HEK293T (cell line): ENCODE measurements at regions of chr5 and their contacts with region 1.

Region 1: DNA sequence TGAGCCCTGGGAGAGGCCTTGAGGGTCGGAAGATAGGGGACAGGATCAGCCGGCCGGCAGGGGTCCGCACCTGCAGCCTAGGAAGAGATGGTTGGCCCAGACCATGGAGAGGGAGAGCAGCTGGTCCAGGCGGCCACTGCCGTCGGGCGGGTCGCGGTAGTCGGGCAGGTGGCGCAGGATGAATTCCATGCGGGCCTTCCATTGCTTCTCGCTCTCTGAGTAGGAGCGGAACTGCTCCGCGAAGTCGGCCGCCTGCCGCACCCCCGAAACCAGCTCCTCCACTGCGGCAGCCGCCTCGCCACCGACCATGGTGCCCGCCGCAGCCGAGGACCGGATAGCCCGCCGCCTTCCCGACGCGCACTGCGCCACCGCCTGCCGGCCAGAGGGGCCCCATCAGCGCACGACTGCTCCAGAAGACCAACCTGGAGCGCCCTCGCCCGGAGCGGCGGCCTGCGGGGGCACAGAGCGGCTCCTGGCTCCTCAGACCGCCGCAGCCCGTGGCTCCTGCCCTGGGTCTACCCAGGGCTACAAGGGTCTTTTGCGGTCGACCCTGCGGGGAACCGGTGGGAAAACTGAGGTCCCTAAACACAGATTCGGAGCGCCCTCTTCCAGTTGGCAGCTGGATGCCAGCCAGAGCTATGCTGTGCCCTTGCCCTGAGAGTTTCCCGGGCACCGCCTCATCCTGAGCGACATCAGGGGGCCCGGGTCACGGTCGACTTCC is at the start of gene CDKN2AIPNL:
- DNase-seq: peak; percentile 85

Region 2: DNA sequence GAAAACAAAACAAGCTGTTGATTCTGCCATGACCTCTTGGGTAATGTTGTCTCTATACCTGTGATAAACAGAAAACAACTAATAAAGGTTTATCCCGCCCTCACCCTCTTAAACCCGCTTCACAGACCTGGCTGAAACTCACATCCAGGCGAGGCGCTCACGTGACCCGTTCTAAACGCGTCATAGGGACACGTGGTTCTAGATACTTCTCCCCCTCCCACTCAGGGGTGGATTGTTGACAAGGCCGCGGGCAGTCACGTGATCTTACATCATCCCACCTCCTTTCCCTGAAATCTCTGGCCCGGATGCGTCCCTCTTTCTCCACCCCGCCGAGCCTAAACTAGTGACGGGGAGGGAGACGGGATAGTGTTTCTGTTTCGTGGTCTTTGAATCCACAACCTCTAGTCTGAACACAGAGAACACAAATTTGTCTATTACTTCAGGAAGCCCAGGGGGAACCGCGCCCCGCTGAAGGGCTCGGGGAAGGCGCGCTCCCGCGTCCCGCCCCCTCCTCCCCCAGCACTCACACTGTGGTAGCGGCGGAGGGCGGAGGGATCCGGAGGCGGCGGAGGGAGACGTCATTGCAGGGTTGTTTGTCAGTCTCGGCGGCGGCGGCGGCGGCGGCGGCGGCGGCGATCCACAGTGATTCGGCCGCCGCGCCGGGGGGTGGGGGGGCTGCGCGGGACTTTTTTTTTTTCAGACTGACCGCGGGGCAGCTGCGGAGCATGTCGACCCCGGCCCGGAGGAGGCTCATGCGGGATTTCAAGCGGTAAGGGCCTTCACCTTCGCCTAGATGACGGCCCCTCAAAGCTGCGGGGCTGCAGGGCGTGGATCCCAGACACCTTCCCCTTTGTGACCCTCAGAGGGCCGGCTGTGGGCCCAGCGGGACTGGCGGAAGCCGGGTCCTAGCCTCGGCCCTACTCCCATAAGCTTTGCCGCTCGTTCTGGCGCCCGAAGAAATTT is 40.6 kb before region 1 on chr5 and contains the start of gene UBE2B:
- CTCF ChIA-PET with region 1: interaction called, 4 read pairs
- POLR2A ChIA-PET with region 1: interaction called, 15 read pairs
- DNase-seq: peak; percentile 82

Region 3: GRCh38 chr5:134397196-134397595 is 14.5 kb before region 1 on chr5:
- CTCF ChIA-PET with region 1: interaction called, 3 read pairs
- POLR2A ChIA-PET with region 1: interaction called, 11 read pairs
- DNase-seq: no peak

Region 4: GRCh38 chr5:134439210-134439664 is 27.5 kb after region 1 on chr5:
- CTCF ChIA-PET with region 1: no interaction called
- POLR2A ChIA-PET with region 1: no interaction called
- DNase-seq: no peak

Region 5: DNA sequence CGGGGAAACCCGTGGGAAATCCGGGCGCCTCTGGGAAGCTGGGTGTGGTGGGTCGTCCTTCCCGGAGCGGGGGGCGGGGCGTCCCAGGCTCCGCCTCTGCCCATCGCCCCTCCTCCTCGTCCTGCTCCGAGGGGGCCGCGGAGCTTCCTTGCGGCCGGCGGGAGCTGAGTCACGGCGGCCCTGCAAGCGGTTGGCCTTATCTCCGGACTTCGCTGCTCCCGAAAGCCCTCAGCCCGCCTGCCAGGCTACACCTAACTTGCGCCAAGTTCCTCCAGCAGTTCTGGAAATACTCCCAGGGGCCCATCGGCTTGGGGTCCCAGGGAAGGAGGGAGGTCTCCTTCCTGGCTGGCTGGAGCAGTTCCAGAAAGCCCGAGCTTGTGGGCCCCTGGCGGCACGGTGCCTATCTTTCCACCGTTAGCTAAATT is 54.1 kb after region 1 on chr5:
- CTCF ChIA-PET with region 1: no interaction called
- POLR2A ChIA-PET with region 1: interaction called, 16 read pairs
- DNase-seq: peak; percentile 86

Region 6: GRCh38 chr5:134527146-134527960 is 115.6 kb after region 1 on chr5:
- CTCF ChIA-PET with region 1: interaction called, 6 read pairs
- POLR2A ChIA-PET with region 1: interaction called, 23 read pairs
- DNase-seq: peak; percentile 80

Region 7: DNA sequence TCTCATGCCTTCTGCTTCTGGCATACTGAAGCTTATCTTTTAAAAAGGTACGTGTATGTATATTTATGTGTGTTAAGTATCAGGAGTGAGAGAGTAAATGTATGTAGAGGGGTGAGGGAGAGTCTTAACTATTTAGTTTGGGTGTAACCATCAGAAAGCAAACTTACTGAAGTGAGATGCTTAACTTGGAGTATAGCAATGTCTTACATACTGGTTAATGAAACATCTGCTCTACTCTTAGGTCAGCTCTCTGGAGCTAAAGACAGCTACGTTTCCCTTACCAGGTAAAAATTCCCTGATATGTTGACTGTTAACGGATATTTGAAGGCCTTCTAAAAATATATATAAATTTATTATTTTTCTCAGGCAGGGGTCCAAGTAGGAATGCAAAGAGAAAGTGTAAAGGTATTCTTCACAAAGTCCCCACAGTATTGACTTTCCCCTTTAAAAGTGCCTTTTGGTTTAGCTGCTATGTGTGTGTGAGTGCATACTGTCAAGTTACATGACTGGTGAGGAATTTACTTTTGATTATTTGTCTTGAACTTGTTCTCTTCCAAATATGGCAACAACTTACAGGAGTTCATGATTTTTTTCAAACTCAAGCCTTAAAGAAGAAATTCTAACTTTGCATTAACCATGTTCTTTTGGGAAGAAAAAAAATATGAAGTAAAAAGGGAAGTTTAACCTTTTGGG is 421.8 kb after region 1 on chr5:
- CTCF ChIA-PET with region 1: no interaction called
- POLR2A ChIA-PET with region 1: no interaction called
- DNase-seq: no peak